Natural killer cell (primary cell): ENCODE measurements at regions of chr17 and their contacts with region 1.

Region 1: DNA sequence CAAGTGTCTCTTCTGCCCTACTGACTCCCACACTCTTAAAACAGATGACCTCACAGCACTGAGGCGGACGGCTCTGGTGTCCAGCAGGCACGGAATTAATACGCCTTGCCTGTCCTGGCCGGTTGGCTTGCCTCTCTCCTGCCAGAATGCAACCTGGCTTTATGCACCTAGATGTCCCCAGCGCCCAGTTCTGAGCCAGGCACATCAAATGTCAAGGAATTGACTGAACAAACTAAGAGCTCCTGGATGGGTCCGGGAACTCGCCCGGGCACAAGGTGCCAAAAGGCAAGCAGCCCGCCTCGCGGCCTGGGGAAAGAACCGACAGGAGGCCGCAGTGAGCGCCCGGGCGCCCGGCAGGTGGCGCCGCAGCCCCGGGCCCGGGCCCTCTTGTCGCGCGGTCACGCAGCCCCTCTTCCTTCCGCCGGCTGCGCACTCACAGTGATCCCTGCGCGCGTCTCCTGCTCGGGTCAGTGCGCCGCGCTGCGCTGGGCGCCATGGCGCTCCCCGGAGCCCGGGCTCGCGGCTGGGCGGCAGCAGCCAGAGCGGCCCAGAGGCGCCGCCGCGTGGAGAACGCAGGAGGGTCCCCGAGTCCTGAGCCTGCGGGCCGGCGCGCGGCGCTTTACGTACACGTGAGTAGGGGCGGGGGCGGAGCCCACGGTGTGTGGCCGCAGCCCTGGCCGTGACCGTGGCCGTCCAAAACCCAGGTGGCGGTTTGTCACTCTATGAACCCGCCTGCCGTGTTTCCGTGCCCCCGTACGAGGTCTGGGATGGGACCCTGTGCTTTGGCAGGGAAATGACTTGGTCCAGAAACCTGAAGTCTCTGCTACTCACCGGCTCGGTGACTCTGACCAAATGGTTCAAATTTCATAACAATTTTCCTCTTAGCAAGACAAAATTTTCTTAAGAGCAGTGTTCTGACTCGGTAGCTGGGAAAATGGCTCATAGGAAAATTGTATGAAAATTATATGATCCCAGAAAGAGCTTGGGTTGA is at the start of gene RSAD1:
- DNase-seq: peak; percentile 73 to 94
- ATAC-seq: peak; percentile 91 to 96 (median 91)
- H3K4me3 ChIP-seq: peak within 1 kb of the TSS; percentile 84
- H3K4me3 Mint-ChIP-seq: peak within 1 kb of the TSS; percentile 84
- H3K27ac ChIP-seq: peak within 1 kb of the TSS; percentile 91
- H3K27ac Mint-ChIP-seq: peak within 1 kb of the TSS; percentile 89 to 93
- H3K4me1 ChIP-seq: peaks cover 22% of the 10 kb centered on the region
- H3K4me1 Mint-ChIP-seq: peaks cover 27 to 29% of the 10 kb centered on the region in 2 donors
- H3K27me3 ChIP-seq: no peaks in the 10 kb centered on the region
- H3K27me3 Mint-ChIP-seq: peaks cover 0 to 4% of the 10 kb centered on the region in 2 donors
- CTCF ChIP-seq: peak; percentile 89
- total RNA-seq, gene RSAD1: 49.0 to 71.3 (median 56.5) TPM

Region 2: DNA sequence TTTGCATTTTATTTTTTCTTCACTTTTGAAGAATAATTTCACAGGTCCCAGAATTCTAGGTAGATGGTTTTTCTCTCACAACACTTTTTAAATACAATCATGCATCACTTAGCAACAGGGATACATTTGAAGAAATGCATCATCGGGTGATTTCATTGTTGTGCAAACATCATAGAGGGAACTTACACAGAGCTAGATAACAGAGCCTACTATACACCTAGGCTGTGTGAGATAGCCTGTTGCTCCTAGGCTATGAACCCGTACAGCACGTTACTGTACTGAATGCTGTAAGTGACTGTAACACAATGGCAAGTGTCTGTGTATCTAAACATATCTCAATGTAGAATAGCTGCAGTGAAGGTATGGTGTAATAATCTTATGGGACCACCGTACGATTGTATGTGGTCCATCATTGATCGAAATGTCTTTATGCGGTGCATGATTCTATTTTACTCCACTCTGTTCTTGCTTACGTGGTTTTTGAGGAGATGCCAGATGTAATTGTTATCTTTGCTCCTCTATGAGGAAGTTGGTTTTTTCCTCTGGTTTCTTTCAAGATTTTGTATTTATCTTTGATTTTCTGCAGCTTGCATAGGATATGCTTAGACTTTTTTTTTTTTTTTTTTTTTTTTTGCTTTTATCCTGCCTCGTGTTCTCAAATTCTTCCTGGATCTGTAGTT is 239.9 kb before region 1 on chr17:
- intact Hi-C with region 1: no loop called
- DNase-seq: no peak
- ATAC-seq: no peak
- H3K4me3 ChIP-seq: no peak overlapping the region
- H3K4me3 Mint-ChIP-seq: no peak overlapping the region
- H3K27ac ChIP-seq: no peak overlapping the region
- H3K27ac Mint-ChIP-seq: no peak overlapping the region
- H3K4me1 ChIP-seq: no peaks in the 10 kb centered on the region
- H3K4me1 Mint-ChIP-seq: no peaks in the 10 kb centered on the region
- H3K27me3 ChIP-seq: peaks cover 3% of the 10 kb centered on the region
- H3K27me3 Mint-ChIP-seq: peaks cover 23 to 39% of the 10 kb centered on the region in 2 donors
- CTCF ChIP-seq: no peak

Region 3: DNA sequence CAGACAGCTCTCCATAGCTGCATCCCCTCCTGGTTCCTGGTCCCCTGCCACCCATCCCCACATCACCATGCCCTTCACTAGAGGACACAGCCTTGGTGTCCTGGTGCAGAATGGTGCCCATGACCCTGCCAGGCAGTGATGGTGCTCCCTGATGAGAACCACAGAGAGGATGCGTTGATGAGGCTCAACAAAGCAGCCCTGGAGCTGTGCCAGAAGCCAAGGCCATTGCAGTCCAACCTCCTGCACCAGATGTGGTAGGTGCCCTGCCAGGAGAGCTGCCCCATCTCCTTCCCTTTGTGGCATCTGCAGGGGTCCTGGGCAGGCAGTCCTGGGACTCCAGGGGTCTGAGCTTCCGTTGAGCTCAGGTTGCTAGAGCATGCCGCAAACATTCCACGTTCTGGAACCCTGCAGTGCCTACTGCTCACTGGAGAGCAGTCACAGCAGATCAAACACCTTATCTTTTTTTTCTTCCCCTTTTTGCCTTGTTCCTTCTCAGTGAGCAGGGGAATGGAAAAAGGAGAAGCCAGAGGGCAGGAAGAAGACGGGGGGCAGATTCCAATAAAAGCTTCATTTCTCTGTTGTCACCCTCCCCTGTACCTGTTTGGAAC is 48.6 kb after region 1 on chr17:
- intact Hi-C with region 1: no loop called
- DNase-seq: no peak
- ATAC-seq: no peak
- H3K4me3 ChIP-seq: no peak overlapping the region
- H3K4me3 Mint-ChIP-seq: no peak overlapping the region
- H3K27ac ChIP-seq: no peak overlapping the region
- H3K27ac Mint-ChIP-seq: no peak overlapping the region
- H3K4me1 ChIP-seq: no peaks in the 10 kb centered on the region
- H3K4me1 Mint-ChIP-seq: no peaks in the 10 kb centered on the region
- H3K27me3 ChIP-seq: peaks cover 8% of the 10 kb centered on the region
- H3K27me3 Mint-ChIP-seq: peaks cover 16 to 20% of the 10 kb centered on the region in 2 donors
- CTCF ChIP-seq: no peak

Region 4: GRCh38 chr17:50541716-50542688 is 63.3 kb after region 1 on chr17:
- intact Hi-C with region 1: loop called (anchors 5 kb)
- DNase-seq: peak; percentile 81 to 89
- ATAC-seq: peak; percentile 83 to 89 (median 86)
- H3K4me3 ChIP-seq: peak overlapping the region; percentile 67
- H3K4me3 Mint-ChIP-seq: peak overlapping the region; percentile 85
- H3K27ac ChIP-seq: no peak overlapping the region
- H3K27ac Mint-ChIP-seq: peak overlapping the region; percentile 48 to 50
- H3K4me1 ChIP-seq: peaks cover 23% of the 10 kb centered on the region
- H3K4me1 Mint-ChIP-seq: peaks cover 20 to 26% of the 10 kb centered on the region in 2 donors
- H3K27me3 ChIP-seq: no peaks in the 10 kb centered on the region
- H3K27me3 Mint-ChIP-seq: peaks cover 12 to 20% of the 10 kb centered on the region in 2 donors
- CTCF ChIP-seq: peak; percentile 60

Region 5: DNA sequence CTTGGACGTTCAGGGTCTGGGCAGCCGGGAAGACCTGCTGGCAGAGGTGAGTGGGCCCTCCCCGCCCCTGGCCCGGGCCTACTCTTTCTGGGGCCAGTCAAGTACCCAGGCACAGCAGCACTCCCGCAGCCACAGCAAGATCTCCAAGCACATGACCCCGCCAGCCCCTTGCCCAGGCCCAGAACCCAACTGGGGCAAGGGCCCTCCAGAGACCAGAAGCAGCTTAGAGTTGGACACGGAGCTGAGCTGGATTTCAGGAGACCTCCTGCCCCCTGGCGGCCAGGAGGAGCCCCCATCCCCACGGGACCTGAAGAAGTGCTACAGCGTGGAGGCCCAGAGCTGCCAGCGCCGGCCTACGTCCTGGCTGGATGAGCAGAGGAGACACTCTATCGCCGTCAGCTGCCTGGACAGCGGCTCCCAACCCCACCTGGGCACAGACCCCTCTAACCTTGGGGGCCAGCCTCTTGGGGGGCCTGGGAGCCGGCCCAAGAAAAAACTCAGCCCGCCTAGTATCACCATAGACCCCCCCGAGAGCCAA is 147.4 kb after region 1 on chr17:
- intact Hi-C with region 1: loop called (anchors 1 kb)
- DNase-seq: peak; percentile 42 to 79
- ATAC-seq: peak in 2 of 3 donors; percentile 69 to 72
- H3K4me3 ChIP-seq: no peak overlapping the region
- H3K4me3 Mint-ChIP-seq: no peak overlapping the region
- H3K27ac ChIP-seq: no peak overlapping the region
- H3K27ac Mint-ChIP-seq: no peak overlapping the region
- H3K4me1 ChIP-seq: peaks cover 5% of the 10 kb centered on the region
- H3K4me1 Mint-ChIP-seq: peaks cover 0 to 9% of the 10 kb centered on the region in 2 donors
- H3K27me3 ChIP-seq: no peaks in the 10 kb centered on the region
- H3K27me3 Mint-ChIP-seq: peaks cover 14 to 17% of the 10 kb centered on the region in 2 donors
- CTCF ChIP-seq: peak; percentile 46